ENCODE measurements at regions of chr20 and their contacts with region 1.

Region 1: DNA sequence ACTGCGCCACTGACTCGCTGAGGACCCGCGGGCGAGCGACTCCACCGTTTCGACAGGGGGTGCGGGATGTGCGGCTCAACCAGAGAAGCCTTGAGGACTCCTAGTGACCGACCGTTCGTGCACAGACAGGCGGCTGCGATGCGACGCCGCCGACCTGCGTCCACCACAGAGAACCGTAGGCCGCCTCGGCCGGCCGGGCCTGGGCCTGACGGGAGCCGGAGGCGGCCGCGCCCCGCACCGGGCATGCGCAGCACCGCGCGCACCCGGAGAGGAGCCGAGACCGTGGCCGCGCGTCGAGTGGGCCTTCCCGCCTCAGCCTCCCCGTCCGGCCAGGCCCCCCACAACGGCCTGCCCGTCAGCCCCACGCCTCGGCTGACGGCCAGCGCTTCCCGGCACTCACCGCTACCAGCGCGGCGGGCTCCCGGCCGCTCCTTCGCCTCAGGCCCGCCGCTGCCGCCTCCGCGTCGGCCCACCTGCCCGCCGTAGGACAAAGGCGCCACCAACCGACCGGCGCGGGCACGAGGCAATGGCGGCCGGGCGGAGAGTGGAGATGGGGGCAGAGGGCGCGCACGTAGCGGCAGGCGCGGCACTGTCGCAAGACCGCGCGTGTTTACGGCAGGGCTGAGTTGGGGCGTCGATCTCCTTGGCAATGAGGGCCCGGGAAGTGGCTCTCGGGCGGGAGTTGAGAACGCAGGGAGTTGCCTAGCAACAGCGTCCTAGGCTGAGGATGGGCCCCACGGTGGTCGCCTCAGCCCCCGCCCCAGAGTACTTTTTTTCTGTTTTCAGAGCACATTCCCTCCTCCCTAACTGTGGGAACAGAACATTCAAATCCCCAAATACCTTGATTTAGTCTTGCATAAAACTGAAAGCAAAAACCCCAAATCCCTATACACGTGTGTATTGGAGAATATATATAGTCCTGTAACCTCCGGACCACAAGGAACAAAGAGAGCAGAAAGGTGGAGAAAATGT is at the start of gene NCOA5:
- DNase-seq: peak; percentile 97
- H3K4me3 ChIP-seq: peak within 1 kb of the TSS; percentile 78 to 94
- H3K27ac ChIP-seq: peak within 1 kb of the TSS; percentile 85 to 97
- H3K4me1 ChIP-seq: peaks cover 4 to 12% of the 10 kb centered on the region in 2 experiments; a peak in 3 of 4 replicates
- H3K27me3 ChIP-seq: no peaks in the 10 kb centered on the region
- CTCF ChIP-seq: peak; percentile 13; the same call in 1 of the 2 replicates
- EP300 ChIP-seq: peak; percentile 1 to 18; a peak in 2 of 4 replicates
- RAD21 ChIP-seq: peak; percentile 39
- polyA plus RNA-seq, gene NCOA5: 18.6 and 20.4 TPM in 2 replicates

Region 2: GRCh38 chr20:45987108-45987780 is 102.5 kb before region 1 on chr20:
- CTCF ChIA-PET with region 1: interaction called, 16 read pairs
- POLR2A ChIA-PET with region 1: no interaction called
- DNase-seq: peak; percentile 91
- H3K4me3 ChIP-seq: no peak overlapping the region; a peak in 1 of 4 replicates
- H3K27ac ChIP-seq: no peak overlapping the region
- H3K4me1 ChIP-seq: no peaks in the 10 kb centered on the region; a peak in 1 of 4 replicates
- H3K27me3 ChIP-seq: no peaks in the 10 kb centered on the region; the same call in 1 of the 2 replicates
- CTCF ChIP-seq: peak; percentile 90
- EP300 ChIP-seq: no peak
- RAD21 ChIP-seq: peak; percentile 79

Region 3: GRCh38 chr20:46013826-46014516 is 75.7 kb before region 1 on chr20:
- CTCF ChIA-PET with region 1: interaction called, 21 read pairs
- POLR2A ChIA-PET with region 1: no interaction called
- DNase-seq: peak; percentile 84
- H3K4me3 ChIP-seq: peak overlapping the region in 1 of 2 experiments; percentile 41; a peak in 2 of 4 replicates
- H3K27ac ChIP-seq: no peak overlapping the region
- H3K4me1 ChIP-seq: peaks cover 0 to 6% of the 10 kb centered on the region in 2 experiments; a peak in 1 of 4 replicates
- H3K27me3 ChIP-seq: no peaks in the 10 kb centered on the region
- CTCF ChIP-seq: peak; percentile 67
- EP300 ChIP-seq: no peak
- RAD21 ChIP-seq: peak; percentile 57

Region 4: DNA sequence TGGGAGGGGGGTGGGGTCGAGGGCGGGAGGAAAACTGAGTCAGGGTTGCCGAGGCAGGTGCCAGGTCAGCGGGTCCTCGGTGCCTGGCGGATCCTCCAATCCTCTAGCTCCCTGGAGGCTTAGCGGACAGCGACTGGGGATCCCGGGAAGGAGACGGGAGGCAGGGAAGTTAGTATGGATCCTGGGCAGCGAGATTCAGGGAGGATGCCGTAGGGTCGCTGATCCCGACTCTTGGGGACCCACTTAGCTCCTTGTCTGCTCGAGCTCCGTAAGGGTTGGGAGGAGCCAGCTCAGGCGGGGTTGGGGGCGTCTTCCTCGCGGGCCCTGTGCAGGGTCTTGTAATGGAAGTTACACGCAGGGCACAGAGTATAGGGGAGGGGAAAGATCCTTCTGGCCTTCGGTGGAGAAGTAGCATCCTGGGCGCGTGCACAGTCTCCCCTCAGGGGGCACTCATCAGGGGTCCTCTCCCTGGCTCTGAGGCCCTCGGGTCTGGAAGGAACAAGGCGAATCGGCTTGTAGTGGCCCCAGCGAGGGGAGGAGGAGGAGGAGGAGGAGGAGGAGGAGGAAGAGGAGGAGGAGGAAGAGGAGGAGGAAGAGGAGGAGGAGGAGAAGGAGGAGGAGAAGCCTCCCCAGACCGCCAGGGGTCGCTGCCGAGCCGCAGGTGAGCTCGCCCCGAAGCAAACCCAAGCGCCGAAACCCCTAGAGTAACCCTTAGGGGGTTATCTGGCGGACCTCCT is 67.1 kb before region 1 on chr20:
- CTCF ChIA-PET with region 1: interaction called, 13 read pairs
- POLR2A ChIA-PET with region 1: no interaction called
- DNase-seq: peak; percentile 59
- H3K4me3 ChIP-seq: peak overlapping the region; percentile 59 to 60
- H3K27ac ChIP-seq: no peak overlapping the region; a peak in 1 of 4 replicates
- H3K4me1 ChIP-seq: peaks cover 0 to 13% of the 10 kb centered on the region in 2 experiments; a peak in 1 of 4 replicates
- H3K27me3 ChIP-seq: no peaks in the 10 kb centered on the region
- CTCF ChIP-seq: peak; percentile 59
- EP300 ChIP-seq: no peak
- RAD21 ChIP-seq: peak; percentile 52

Region 5: GRCh38 chr20:46051556-46052308 is 38.0 kb before region 1 on chr20:
- CTCF ChIA-PET with region 1: interaction called, 11 read pairs
- POLR2A ChIA-PET with region 1: no interaction called
- DNase-seq: no peak
- H3K4me3 ChIP-seq: no peak overlapping the region
- H3K27ac ChIP-seq: no peak overlapping the region
- H3K4me1 ChIP-seq: peaks cover 3 to 7% of the 10 kb centered on the region in 2 experiments; a peak in 2 of 4 replicates
- H3K27me3 ChIP-seq: no peaks in the 10 kb centered on the region
- CTCF ChIP-seq: no peak
- EP300 ChIP-seq: no peak
- RAD21 ChIP-seq: no peak

Region 6: DNA sequence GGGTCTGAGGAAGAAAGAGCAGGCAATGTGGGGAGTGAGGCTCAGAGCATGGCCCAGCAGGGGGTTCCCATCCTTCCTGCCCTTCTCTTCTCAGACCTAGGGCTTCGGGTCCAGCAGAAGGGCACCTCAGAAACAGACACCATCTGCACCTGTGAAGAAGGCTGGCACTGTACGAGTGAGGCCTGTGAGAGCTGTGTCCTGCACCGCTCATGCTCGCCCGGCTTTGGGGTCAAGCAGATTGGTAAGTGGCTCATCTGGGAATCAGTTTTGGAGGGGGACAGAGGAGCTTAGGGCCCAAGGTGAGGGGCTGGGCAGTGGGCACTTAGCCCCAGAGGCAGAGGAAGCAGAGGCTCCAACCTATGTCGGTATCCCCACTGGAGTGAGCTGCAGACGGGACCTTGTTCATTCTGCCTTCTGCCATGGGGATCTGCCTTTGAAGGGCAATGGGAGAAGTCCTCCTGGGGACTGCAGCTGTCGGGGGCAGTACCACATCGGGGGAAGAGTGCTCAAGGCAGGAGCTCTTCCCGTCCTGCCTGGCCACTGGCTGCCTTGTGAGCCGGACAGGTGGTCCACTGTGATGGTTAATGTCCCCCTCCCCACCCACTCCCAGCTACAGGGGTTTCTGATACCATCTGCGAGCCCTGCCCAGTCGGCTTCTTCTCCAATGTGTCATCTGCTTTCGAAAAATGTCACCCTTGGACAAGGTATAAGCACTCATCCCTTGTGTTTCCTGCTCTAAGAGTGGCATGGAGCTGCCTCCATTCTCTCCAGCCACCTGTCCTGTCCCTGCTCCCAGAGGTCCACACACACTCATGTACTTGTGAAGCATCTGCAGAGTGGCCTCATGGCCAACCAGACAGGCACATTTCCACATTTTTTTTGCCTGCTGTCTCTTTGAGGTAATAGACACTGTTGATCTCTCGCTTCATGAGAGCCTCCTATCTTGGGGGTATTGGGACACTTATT is 33.1 kb after region 1 on chr20:
- CTCF ChIA-PET with region 1: no interaction called
- POLR2A ChIA-PET with region 1: no interaction called
- DNase-seq: no peak
- H3K4me3 ChIP-seq: no peak overlapping the region; a peak in 1 of 4 replicates
- H3K27ac ChIP-seq: no peak overlapping the region
- H3K4me1 ChIP-seq: peaks cover 2 to 11% of the 10 kb centered on the region in 2 experiments; a peak in 2 of 4 replicates
- H3K27me3 ChIP-seq: peaks cover under 1% of the 10 kb centered on the region; the same call in 1 of the 2 replicates
- CTCF ChIP-seq: no peak
- EP300 ChIP-seq: no peak
- RAD21 ChIP-seq: no peak

Measured in SK-N-SH (cell line).